G401 (cell line): ENCODE measurements at regions of chr19 and their contacts with region 1.

Region 1: DNA sequence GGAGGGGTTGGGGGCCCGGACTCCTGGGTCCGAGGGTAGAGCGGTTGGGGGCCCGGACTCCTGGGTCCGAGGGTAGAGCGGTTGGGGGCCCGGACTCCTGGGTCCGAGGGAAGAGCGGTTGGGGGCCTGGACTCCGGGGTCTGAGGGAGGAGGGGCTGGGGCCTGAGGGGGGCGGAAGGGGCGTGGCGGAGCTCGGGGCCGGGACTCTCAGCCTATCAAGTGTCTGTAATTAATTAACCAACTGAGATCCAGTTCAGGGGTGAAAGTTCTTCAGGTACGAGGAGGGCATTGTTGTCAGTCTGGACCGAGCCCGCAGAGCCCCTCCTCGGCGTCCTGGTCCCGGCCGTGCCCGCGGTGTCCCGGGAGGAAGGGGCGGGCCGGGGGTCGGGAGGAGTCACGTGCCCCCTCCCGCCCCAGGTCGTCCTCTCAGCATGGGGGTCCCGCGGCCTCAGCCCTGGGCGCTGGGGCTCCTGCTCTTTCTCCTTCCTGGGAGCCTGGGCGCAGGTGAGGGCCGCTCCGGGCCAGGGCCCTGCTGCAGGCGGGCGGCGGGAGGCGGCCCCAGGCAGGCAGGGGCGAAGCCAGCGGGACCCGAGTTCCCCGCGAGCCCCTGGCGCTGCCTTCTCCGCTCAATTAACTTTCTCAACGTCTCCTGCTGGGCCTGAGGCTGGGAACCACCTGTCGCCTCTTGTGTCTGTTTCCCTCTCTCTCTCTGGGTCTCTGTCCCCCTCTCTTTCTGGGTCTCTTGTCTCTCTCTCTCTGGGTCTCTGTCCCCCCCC is 697 bp downstream of the FCGRT start:
- DNase-seq: no peak

Region 2: DNA sequence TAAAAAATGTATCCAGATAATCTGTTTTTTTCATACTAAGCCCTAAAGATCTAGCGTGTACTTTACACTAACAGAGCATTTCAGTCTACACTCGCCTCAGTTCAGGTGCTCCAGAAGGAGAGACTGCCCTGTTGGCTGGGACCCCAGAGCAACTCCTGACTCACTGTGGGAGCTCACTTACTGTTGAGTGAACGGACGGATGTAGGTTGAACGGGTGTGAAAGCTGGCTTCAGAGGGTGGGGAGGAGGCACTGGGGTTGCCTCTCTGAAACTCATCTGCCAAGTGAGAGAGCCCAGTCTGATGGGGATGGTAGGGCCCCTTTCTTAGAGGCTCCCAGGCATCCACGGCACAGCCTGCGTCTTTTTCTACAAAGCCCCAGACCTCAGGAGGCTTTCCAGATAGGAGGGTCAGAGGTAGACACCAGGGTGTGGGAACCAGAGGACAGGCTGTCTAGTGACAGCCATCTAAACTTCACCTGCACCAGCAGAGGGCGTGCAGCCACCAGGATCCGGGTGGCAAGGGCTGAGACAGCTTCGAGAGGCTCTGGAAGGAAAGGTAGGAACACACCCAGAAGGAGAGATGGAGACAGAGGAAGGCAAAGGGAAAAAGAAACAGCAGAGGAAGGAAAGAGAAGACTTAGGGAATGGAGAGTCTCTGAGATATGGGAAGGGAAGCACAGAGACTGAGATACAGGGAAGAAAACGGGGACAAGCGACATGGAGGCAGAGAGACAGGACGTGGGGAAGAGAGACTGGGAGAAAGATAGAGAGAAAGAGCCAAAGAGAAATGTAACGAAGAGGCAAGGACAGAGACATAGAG is 121.4 kb before region 1 on chr19:
- in situ Hi-C with region 1: no loop called
- DNase-seq: peak; percentile 96

Region 3: DNA sequence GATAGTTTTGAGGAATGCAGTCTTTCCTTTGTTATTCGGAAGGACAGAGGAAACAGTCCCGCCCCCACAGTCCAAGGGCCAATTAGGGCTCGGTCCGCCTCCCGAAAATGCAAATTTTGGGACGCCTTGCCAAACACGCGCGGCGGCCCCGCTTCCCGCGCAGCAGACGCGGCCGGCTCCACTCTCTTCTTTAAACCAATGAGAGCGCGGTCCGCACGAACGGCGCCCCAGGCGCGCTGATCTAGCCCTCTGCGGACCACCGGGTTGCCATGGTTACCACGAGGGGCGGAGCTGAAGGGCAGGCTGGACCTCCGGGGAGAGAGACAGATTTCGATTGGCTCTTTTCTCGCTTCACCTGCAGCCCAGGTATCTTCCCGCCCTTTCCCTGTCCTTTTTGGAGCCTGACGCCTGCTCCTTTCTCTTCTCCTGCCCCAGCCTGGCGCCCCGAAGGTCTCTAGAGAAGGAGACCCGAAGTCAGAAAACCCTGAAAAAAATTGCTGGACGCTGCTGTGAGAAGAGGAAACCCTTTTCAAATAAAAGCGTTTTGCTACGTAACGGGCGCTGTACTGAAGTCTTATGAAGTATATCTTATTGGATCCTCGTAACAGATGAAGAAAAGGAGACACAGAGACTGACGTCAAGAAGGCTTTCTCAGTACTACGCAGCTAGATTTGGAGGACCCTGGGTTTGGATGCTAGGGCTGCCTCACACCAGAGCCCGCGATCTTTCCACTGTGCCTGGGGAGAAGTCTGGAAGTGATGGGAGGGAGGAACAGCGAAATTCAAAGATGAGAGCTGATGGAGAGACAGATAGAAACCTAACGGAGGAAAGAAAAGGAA is 91.9 kb before region 1 on chr19:
- in situ Hi-C with region 1: no loop called
- DNase-seq: peak; percentile 93

Region 4: GRCh38 chr19:49442793-49443365 is 70.3 kb before region 1 on chr19:
- in situ Hi-C with region 1: no loop called
- DNase-seq: peak; percentile 86

Region 5: DNA sequence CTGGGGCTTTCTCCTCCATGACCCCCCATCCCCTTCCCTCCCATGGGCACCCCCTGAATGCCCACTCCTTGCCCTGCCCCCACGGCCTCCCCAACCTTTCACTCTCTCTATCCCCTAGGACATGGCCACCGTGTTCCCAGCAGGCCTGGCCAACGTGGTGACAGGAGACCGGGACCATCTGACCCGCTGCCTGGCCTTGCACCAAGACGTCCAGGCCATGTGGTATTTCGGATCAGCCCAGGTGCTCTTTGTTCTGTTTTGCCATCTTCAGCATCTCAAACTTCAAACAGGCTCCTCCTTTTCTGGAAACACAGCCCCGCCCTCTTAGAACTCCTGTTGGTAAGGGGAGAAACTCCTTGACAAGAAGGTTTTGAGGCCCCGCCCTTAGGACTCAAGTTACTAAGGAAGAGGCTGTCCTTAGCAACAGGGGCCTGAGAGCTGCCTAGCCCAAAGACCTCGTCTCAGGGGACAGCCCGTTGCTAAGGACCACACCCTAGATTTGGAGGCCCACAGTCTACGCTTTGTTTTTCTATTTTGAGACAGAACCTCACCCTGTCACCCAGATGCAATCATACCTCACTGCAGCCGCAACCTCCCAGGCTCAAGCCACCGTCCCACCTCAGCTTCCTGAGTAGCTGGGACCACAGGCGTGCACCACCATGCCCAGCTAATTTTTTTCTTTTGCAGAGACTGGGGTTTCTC is 44.3 kb before region 1 on chr19:
- in situ Hi-C with region 1: no loop called
- DNase-seq: no peak

Region 6: GRCh38 chr19:49560358-49560900 is 47.3 kb after region 1 on chr19:
- in situ Hi-C with region 1: loop called (anchors 5 kb)
- DNase-seq: no peak

Region 7: GRCh38 chr19:49676690-49677231 is 163.6 kb after region 1 on chr19:
- in situ Hi-C with region 1: loop called (anchors 10 kb)
- DNase-seq: peak; percentile 100